ENCODE measurements at regions of chr22 and their contacts with region 1.

Region 1: DNA sequence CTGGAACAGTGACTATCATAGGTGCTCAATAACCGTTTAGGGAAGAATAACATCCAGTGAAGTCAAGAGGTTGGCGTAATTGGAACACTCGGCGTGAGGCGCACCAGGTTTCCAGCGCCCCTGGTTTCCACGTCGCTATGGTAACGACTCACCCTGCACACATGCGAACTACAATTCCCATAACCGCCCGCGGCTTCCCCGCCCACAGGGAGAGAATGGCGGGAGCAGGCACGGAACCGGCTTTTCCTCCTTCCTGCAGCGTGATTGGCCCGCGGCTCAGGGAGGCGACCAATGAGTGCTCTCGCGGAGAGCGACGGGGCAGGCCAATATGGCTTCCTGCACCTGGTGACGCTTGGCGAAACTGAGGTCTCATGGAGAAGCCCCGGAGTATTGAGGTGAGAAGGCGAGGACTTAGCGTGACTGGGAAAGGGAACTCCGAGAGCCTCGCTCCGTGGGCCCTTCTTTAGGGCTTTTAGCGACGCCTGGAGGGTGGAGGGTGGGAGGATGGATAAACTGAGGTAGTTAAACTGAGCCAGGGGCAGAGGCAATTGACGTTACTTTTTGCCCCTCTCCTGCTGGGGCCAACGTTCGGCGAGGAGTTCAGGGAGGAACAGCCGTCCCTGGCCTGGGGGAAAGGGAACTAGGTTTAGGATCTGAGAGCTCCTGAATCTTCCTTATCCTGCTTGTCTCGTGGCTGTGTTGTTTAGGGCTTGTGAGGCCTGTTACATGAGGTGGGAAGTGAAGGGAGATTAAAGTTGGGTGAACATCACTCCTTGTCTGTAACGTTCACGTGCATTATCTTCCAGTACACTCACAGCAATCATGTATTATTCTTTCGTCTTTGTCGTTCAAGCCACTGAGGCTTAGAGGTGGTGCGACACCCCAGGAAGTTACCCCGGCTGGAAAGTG is at the start of gene L3MBTL2:
- DNase-seq: peak; percentile 100
- H3K4me3 Mint-ChIP-seq: peak within 1 kb of the TSS; percentile 94
- H3K27ac Mint-ChIP-seq: peak within 1 kb of the TSS; percentile 94
- H3K4me1 Mint-ChIP-seq: peaks cover 20% of the 10 kb centered on the region
- H3K27me3 Mint-ChIP-seq: peaks cover 19% of the 10 kb centered on the region
- total RNA-seq, gene L3MBTL2: 53.3 and 55.0 TPM in 2 replicates

Region 2: GRCh38 chr22:40939202-40939601 is 266.0 kb before region 1 on chr22:
- intact Hi-C with region 1: no loop called
- DNase-seq: no peak
- H3K4me3 Mint-ChIP-seq: no peak overlapping the region
- H3K27ac Mint-ChIP-seq: peak overlapping the region; percentile 68
- H3K4me1 Mint-ChIP-seq: peaks cover 8% of the 10 kb centered on the region
- H3K27me3 Mint-ChIP-seq: no peaks in the 10 kb centered on the region

Region 3: DNA sequence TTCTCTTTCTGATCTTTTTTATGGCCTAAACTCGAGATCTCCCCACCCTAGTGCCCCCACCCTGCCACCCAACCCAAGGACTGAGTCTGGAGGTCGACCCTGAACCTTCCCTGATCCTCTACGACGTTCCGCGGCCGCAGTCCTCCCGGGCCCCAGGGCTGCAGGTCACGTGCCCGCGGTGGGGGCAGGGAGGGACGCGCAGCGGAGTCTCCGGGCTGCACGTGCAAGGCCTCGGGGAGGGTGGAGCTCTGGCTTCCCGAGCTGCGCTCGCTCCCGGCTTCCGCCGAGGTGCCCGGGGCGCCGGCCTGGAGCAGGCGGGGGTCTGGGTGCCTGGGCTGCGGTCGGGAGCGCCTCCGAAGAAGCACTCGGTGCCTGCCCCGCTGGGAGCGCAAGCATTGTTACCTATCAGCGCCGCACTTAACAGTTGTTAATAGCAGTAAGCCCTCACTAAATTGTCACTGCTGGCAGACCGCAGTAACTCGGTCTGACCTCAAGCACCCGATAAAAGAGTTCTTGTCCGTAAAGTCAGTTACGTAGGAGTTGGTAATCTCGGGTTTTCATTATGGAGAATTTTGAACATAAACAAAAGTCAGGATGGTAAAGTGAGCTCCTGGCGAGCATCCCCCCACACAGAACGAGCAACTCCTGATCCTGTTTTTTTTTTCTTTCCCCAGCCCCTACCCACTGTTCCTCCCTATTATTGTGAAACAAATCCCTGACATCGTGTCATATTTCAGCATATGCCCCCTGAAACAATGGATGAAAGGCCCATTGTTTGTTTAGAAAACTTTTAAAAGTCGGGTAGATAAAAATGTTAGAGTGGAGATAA is 182.6 kb before region 1 on chr22:
- intact Hi-C with region 1: loop called (anchors 2 kb)
- DNase-seq: peak; percentile 93
- H3K4me3 Mint-ChIP-seq: peak overlapping the region; percentile 86
- H3K27ac Mint-ChIP-seq: peak overlapping the region; percentile 88
- H3K4me1 Mint-ChIP-seq: peaks cover 20% of the 10 kb centered on the region
- H3K27me3 Mint-ChIP-seq: peaks cover 10% of the 10 kb centered on the region

Region 4: DNA sequence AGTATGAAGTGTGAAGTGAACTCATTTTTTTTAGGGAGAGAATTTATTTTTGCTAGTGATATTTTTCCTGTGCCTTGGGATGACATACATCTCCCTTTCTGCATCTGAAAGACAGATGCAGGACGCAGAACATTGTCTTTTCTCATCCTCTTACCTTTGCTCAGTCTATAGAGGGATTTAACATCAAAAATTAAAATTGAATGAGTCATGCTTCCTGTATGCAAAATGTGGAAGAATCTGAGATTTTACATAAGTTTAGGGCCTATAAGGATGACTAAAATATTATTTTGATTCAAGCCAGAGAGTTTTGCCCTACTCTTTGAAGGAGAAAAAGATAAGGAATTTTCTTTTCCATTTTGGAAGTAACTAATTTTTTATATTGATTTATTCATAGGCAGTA is 443.2 kb after region 1 on chr22:
- intact Hi-C with region 1: no loop called
- DNase-seq: no peak
- H3K4me3 Mint-ChIP-seq: no peak overlapping the region
- H3K27ac Mint-ChIP-seq: no peak overlapping the region
- H3K4me1 Mint-ChIP-seq: peaks cover 5% of the 10 kb centered on the region
- H3K27me3 Mint-ChIP-seq: no peaks in the 10 kb centered on the region

Measured in activated CD4-positive, alpha-beta T cell treated with anti-CD3 and anti-CD28 coated beads, Interleukin-2, amount 10 ng/mL, durations not matched to agents 24 days and 14 days (primary cell).